ENCODE measurements at regions of chr20 and their contacts with region 1.

Region 1: GRCh38 chr20:13784893-13785715 is at the starts of genes ESF1 and NDUFAF5:
- DNase-seq: peak; percentile 85 to 96
- ATAC-seq: peak; percentile 96 to 99 (median 98)
- H3K4me3 ChIP-seq: peak within 1 kb of the TSS; percentile 87
- H3K4me3 Mint-ChIP-seq: peak within 1 kb of the TSS; percentile 97
- H3K27ac ChIP-seq: peak within 1 kb of the TSS; percentile 89
- H3K27ac Mint-ChIP-seq: peak within 1 kb of the TSS; percentile 98 to 99
- H3K4me1 ChIP-seq: peaks cover 17% of the 10 kb centered on the region
- H3K4me1 Mint-ChIP-seq: peaks cover 37 to 50% of the 10 kb centered on the region in 2 donors
- H3K27me3 ChIP-seq: no peaks in the 10 kb centered on the region
- H3K27me3 Mint-ChIP-seq: no peaks in the 10 kb centered on the region
- CTCF ChIP-seq: no peak
- total RNA-seq, gene ESF1: 8.4 to 11.1 (median 10.0) TPM
- total RNA-seq, gene NDUFAF5: 63.4 to 75.9 (median 63.7) TPM

Region 2: DNA sequence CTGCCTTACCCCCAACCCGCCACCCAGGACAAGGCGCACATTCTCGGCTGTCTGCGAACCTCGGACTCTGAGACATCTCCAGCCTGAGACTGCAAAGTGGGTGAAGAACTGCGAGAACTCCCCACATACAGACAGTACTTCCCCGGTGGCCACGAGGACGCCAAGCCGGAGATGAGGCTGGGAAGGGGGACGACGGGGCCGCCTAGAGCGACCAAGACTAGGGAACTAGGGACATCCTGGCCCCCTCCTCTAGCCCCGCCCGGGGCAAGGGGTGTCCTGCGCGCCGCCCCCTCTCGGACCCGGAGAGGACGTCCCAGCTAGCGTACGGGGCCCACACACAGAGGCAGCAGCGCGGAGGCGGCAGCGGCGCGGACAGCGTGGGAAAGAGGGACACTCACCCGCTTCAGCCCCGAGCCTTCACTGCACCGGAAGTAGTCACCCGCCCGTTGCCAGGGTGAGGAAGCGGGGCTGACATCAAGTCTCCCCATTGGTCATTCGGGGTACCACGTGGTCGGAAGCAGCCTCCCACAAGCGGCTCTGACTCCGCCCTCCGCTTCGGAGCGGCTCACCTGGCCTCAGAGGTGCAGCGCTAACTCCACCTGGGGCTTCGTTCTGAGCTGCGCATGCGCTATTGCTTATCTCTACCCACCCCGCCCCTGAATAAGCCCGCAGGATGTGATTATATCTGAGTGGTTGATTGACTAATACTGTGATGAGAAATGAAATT is 146.4 kb before region 1 on chr20 and contains the start of gene TASP1:
- intact Hi-C with region 1: loop called (anchors 5 kb)
- DNase-seq: peak; percentile 94 to 99
- ATAC-seq: peak; percentile 97 to 99 (median 98)
- H3K4me3 ChIP-seq: peak within 1 kb of the TSS; percentile 84
- H3K4me3 Mint-ChIP-seq: peak within 1 kb of the TSS; percentile 90
- H3K27ac ChIP-seq: peak within 1 kb of the TSS; percentile 70
- H3K27ac Mint-ChIP-seq: peak within 1 kb of the TSS; percentile 83 to 94
- H3K4me1 ChIP-seq: peaks cover 9% of the 10 kb centered on the region
- H3K4me1 Mint-ChIP-seq: peaks cover 14 to 29% of the 10 kb centered on the region in 2 donors
- H3K27me3 ChIP-seq: no peaks in the 10 kb centered on the region
- H3K27me3 Mint-ChIP-seq: peaks cover 11% of the 10 kb centered on the region in 2 donors
- CTCF ChIP-seq: no peak
- total RNA-seq, gene TASP1: 15.5 to 22.3 (median 16.3) TPM

Region 3: DNA sequence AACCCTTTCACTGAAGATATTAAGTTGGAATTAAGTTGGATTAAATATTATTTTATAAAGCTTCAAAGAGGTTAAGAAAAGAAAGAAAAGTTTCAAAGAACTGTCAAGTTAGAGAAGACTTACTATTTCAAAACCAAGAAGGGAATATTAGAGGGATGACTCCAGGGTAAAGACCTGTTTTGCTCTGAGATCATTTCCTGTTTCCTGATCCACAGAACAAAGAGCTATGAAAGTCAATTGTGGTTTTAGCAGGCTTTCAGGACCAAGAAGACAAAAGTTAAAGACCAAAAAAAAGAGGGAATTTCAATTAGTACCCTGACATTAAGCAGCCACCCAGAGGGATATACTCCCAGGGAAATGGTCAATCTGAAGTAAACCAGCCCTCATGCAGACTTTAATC is 19.8 kb before region 1 on chr20:
- intact Hi-C with region 1: no loop called
- DNase-seq: no peak
- ATAC-seq: no peak
- H3K4me3 ChIP-seq: no peak overlapping the region
- H3K4me3 Mint-ChIP-seq: no peak overlapping the region
- H3K27ac ChIP-seq: no peak overlapping the region
- H3K27ac Mint-ChIP-seq: no peak overlapping the region
- H3K4me1 ChIP-seq: no peaks in the 10 kb centered on the region
- H3K4me1 Mint-ChIP-seq: no peaks in the 10 kb centered on the region
- H3K27me3 ChIP-seq: no peaks in the 10 kb centered on the region
- H3K27me3 Mint-ChIP-seq: no peaks in the 10 kb centered on the region
- CTCF ChIP-seq: no peak

Measured in natural killer cell (primary cell).